Adrenal gland (tissue), 19 donors: ENCODE measurements at regions of chr9 and their contacts with region 1.

Region 1: DNA sequence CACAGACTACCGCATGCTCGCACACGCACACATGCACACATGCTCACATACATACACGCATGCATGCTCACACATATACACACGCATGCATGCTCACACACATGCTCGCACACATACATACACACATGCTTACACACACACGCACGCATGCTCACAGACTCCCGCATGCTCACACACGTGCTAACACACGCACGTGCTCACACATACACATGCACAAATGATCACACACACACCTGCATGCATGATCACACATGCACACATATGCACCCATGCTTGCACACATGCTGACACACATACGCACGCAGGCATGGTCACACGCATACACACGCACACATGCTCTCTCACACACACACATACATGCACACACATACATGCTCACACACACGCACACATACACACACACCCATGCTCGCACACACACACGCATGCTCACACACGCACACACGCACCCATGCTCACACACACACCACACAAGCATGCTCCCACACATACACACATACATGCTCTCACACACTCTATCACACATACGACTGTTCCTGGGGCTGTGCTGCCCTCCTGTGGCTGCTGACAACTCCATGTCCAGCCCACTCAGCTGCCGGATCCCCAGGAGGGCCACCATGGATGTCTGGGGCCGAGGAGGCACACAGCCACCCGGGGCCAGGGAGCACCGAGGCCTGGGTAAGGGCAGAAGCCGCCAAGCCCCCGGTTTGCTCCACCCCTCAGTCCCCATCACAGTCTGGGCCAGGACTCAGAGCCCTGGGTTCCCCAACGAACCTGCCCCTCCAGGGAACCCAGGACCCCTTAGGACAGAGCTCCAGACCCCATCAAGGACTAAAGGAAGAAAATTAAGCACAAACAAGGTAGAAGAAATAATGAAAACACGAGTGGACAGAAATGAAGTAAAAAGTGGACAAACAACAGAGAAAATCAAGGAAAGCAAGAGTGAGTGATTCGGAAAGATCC is 31.4 kb upstream of the EGFL7 start:
- DNase-seq: peak; percentile 75 to 89 (median 83)
- H3K4me3 ChIP-seq: no peak overlapping the region
- H3K27ac ChIP-seq: no peak overlapping the region
- H3K4me1 ChIP-seq: peaks cover 0 to 5% of the 10 kb centered on the region in 2 donors
- H3K27me3 ChIP-seq: no peaks in the 10 kb centered on the region
- CTCF ChIP-seq: peak; percentile 56 to 99 (median 86)
- POLR2A ChIP-seq: no peak

Region 2: DNA sequence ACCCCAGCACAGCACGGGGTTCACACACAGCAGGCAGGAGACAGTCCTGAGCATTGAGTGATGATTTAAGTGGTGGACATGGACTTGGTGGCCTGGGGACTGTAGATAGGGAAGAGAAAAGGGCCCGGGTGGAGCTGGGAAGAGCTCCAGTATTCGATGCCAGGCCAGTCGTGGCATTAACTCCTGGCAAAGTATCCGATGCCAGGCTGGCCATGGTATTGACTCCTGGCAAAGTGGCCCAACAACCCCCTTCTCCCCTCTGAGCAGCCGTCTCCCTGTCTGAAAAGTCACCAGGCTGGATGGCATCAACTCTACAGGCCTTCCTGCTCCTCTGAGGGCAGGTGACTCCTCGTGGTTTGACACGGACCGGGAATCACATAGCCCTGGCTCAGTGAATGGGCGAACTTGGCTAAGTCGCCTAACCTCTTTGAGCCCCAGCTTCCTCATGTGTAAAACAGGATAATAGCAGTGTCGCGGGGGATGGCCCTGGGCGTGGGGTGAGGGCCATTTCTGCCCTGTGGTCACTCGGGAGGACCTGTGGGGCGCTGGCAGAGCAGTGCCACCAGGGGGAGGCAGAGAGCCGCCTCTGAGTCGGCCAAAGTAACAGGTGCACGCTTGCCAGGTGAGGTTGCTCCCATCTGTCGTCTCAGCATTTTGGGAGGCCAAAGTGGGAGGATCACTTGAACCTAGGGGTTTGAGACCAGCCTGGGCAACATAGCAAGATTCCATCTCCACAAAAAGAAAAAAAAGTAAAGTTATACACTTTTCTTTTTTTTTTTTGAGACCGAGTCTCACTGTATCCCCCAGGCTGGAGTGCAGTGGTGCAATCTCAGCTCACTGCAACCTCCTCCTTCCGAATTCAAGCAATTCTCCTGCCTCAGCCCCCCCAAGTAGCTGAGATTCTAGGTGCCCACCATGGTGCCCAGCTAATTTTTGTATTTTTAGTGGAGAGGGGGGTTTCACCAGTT is 142.8 kb before region 1 on chr9:
- intact Hi-C with region 1: loop called (anchors 2 kb)
- DNase-seq: peak; percentile 58 to 90 (median 77)
- H3K4me3 ChIP-seq: no peak overlapping the region
- H3K27ac ChIP-seq: no peak overlapping the region
- H3K4me1 ChIP-seq: peaks cover 17 to 29% of the 10 kb centered on the region in 2 donors
- H3K27me3 ChIP-seq: no peaks in the 10 kb centered on the region
- CTCF ChIP-seq: peak; percentile 90 to 99 (median 97)
- POLR2A ChIP-seq: no peak